ENCODE measurements at regions of chr7 and their contacts with region 1.

Region 1: DNA sequence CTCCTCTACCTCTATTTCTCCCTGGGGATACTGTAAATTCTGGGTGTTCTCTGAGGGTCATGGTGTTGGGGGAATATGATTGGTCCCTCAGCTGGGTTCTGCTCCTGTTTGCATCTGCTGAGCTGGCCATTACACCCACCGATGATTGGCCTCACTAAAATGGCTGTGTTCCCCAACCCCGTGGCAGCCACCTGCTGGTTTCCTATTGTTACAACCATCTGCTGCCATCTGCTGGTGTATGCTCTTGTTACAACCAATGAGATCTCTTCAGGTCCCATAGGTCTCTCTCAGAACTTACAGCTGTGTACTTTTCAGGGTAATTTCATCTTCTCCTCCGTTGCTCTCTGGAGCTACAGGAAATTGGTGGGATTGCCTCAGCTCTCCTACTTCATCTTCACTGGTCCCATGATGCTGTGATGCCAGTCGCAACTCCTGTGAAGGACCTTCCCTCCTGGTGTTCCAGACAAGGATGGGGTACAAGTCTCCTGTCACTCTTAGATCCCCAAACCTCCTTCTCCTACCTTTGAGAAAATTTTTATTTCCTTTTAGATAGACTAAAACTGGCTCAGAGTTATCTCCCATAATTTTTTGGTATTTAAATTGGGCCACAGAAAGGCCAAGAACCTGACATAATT is 303.5 kb upstream of the SMIM30 start:
- DNase-seq: peak; percentile 80
- H3K4me3 Mint-ChIP-seq: no peak overlapping the region
- H3K27ac Mint-ChIP-seq: no peak overlapping the region
- H3K4me1 Mint-ChIP-seq: peaks cover 3% of the 10 kb centered on the region
- H3K27me3 Mint-ChIP-seq: peaks cover 3% of the 10 kb centered on the region

Region 2: GRCh38 chr7:112550468-112551060 is 871.2 kb before region 1 on chr7:
- CTCF ChIA-PET with region 1: interaction called, 42 read pairs
- POLR2A ChIA-PET with region 1: no interaction called
- intact Hi-C with region 1: loop called (anchors 1 kb)
- DNase-seq: no peak
- H3K4me3 Mint-ChIP-seq: no peak overlapping the region
- H3K27ac Mint-ChIP-seq: no peak overlapping the region
- H3K4me1 Mint-ChIP-seq: no peaks in the 10 kb centered on the region
- H3K27me3 Mint-ChIP-seq: peaks cover 5% of the 10 kb centered on the region

Region 3: DNA sequence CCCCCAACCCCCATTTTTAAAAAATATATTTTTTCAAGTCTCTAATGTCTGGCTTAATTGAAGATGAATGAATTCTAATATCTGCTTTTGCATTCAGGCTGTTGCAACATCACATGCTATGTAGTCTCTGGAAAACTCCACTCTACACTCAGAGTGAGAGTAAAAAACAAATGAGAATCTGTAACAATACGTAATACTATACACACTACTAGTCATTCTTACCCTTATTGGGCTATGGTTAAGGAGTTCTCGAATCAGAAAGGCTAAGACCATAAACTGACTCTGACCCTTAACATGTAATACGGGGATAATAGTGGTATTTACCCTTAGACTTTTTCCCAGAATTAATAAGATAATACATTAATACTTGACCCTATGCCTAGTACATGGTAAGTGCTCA is 588.7 kb before region 1 on chr7:
- CTCF ChIA-PET with region 1: no interaction called
- POLR2A ChIA-PET with region 1: no interaction called
- intact Hi-C with region 1: no loop called
- DNase-seq: no peak
- H3K4me3 Mint-ChIP-seq: no peak overlapping the region
- H3K27ac Mint-ChIP-seq: no peak overlapping the region
- H3K4me1 Mint-ChIP-seq: no peaks in the 10 kb centered on the region
- H3K27me3 Mint-ChIP-seq: no peaks in the 10 kb centered on the region

Region 4: DNA sequence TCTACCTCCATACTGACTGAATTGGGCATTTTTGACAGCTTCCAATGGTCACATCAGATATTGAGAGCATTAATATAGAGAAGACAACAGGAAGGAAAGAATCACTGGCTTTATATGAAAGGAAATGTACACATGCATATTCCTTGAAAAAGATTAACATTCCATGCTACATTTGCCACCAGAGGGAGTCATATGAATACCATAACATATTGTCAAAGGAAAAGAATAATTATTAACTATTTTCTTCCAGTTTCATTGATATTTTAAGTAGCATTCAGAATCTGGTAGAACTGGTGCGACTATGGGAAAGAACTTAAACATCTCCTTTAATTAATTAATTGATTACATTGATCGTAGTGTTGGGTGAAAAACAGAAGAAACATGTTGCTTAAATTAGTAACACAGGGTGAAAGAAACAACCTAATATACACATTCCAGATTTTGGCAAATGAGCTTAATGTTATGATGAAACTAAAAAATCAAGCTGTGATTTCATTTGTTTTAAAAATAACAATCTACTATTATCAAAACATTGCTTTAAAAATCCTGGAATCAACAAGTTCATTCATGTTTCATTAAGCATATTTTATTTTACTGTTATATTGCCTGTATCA is 406.7 kb before region 1 on chr7:
- CTCF ChIA-PET with region 1: no interaction called
- POLR2A ChIA-PET with region 1: no interaction called
- intact Hi-C with region 1: loop called (anchors 10 kb)
- DNase-seq: no peak
- H3K4me3 Mint-ChIP-seq: no peak overlapping the region
- H3K27ac Mint-ChIP-seq: no peak overlapping the region
- H3K4me1 Mint-ChIP-seq: no peaks in the 10 kb centered on the region
- H3K27me3 Mint-ChIP-seq: no peaks in the 10 kb centered on the region

Region 5: DNA sequence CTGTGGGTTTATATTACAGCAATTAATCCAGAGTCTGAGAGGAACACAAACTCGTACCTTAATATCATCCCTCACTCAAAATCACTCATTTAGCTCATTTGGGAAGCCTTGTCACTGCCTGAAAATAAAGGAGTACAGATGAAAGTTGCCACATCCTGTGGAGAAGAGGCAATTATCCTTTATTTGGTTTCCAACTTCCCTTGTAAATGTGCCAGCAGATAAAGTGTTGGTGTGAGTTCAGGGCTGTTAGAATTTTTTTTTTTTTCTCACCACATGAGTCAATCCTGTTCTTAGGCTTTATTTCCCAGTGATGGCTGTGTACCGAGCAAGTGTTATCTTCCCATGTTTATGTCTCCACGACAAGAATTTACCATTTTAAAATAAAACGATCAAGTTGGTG is 204.5 kb before region 1 on chr7:
- CTCF ChIA-PET with region 1: no interaction called
- POLR2A ChIA-PET with region 1: no interaction called
- intact Hi-C with region 1: no loop called
- DNase-seq: no peak
- H3K4me3 Mint-ChIP-seq: no peak overlapping the region
- H3K27ac Mint-ChIP-seq: no peak overlapping the region
- H3K4me1 Mint-ChIP-seq: no peaks in the 10 kb centered on the region
- H3K27me3 Mint-ChIP-seq: no peaks in the 10 kb centered on the region

Region 6: GRCh38 chr7:113404245-113404644 is 17.6 kb before region 1 on chr7:
- CTCF ChIA-PET with region 1: interaction called, 10 read pairs
- POLR2A ChIA-PET with region 1: no interaction called
- intact Hi-C with region 1: no loop called
- DNase-seq: no peak
- H3K4me3 Mint-ChIP-seq: no peak overlapping the region
- H3K27ac Mint-ChIP-seq: no peak overlapping the region
- H3K4me1 Mint-ChIP-seq: no peaks in the 10 kb centered on the region
- H3K27me3 Mint-ChIP-seq: peaks cover 8% of the 10 kb centered on the region

Measured in activated CD4-positive, alpha-beta memory T cell treated with anti-CD3 and anti-CD28 coated beads for 36 hours (primary cell).